ENCODE measurements at regions of chr22 and their contacts with region 1.

Region 1: GRCh38 chr22:26767351-26768155 is 110.2 kb downstream of the MIAT start:
- DNase-seq: no peak
- H3K4me3 ChIP-seq: no peak overlapping the region
- H3K27ac ChIP-seq: no peak overlapping the region
- H3K4me1 ChIP-seq: peaks cover 2% of the 10 kb centered on the region
- H3K27me3 ChIP-seq: no peaks in the 10 kb centered on the region
- CTCF ChIP-seq: no peak
- EP300 ChIP-seq: no peak
- POLR2A ChIP-seq: no peak

Region 2: DNA sequence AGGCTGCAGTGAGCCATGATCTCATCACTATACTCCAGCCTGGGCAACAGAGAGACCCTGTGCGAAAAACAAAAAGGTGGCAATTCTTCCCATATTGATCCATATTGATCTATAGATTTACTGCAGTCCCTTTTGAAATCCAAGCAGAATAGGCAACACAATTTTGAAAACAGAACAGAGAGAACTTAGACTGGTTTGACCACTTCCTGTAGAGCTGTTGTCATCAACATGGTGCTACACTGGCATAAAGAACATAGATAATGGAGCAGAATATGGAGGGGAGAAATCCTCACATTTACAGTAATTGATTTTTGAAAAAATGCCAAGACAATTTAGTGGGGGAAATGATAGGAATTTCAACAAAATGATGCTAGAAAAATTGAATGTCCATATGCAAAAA is 1168.9 kb before region 1 on chr22:
- intact Hi-C with region 1: loop called in 1 of 4 experiments (anchors 5 kb)
- DNase-seq: no peak
- H3K4me3 ChIP-seq: no peak overlapping the region
- H3K27ac ChIP-seq: no peak overlapping the region
- H3K4me1 ChIP-seq: no peaks in the 10 kb centered on the region
- H3K27me3 ChIP-seq: no peaks in the 10 kb centered on the region
- CTCF ChIP-seq: no peak
- EP300 ChIP-seq: no peak
- POLR2A ChIP-seq: no peak

Region 3: GRCh38 chr22:26377170-26377830 is 390.3 kb before region 1 on chr22:
- intact Hi-C with region 1: no loop called
- DNase-seq: no peak
- H3K4me3 ChIP-seq: no peak overlapping the region
- H3K27ac ChIP-seq: no peak overlapping the region
- H3K4me1 ChIP-seq: no peaks in the 10 kb centered on the region
- H3K27me3 ChIP-seq: no peaks in the 10 kb centered on the region
- CTCF ChIP-seq: no peak
- EP300 ChIP-seq: no peak
- POLR2A ChIP-seq: no peak